ENCODE measurements at regions of chr6 and their contacts with region 1.

Region 1: GRCh38 chr6:136289579-136290409 is at the start of gene BCLAF1:
- DNase-seq: peak; percentile 97
- ATAC-seq: peak; percentile 93
- H3K4me3 ChIP-seq: peak within 1 kb of the TSS; percentile 81 to 99
- H3K27ac ChIP-seq: peak within 1 kb of the TSS; percentile 98
- H3K4me1 ChIP-seq: peaks cover 9 to 24% of the 10 kb centered on the region in 2 experiments
- H3K27me3 ChIP-seq: no peaks in the 10 kb centered on the region
- CTCF ChIP-seq: no peak
- POLR2A ChIP-seq: peak; percentile 88
- RAD21 ChIP-seq: no peak
- total RNA-seq, gene BCLAF1: 159 TPM

Region 2: DNA sequence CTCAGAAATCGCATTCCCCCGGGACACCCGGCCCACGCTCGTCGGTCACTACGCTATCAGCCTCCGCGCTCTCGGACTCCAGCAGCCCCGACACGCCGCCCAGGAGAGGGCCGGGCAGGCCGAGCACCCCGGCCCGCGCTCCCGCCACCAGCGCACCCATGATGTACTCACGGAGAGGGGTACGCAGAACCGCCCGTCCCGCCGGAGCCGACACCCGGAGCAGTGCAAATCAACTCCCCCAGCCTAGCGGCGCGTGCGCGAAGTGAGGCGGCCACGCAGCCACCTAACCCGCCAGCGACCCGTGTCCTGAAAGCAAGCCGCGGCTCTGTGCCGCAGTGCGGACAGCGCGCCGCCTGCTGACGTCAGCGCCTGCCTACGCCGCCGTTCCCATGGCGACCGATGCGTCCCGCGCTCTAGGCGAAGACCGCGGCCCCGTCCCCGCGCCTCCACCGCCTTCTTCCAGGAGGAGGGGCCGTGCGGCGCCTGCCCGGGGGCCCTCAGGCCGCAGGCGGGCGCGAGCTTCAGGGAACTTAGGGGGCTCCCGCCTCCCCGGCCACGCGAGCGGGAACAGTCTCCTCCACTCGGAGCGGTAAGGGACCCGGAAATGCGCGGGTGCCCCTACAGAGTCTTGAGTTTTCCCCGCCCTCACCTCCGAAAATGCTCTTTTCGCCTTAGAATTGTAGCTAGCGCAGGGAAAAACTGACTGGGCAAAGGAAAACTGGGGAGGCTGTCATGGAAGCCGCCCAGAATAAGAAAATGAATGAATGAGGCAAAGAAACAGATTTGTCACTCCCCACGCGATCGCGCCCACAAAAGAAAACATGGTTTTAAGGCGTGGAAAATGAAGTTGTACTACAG is 792.2 kb before region 1 on chr6 and contains the start of gene AHI1:
- CTCF ChIA-PET with region 1: no interaction called
- POLR2A ChIA-PET with region 1: no interaction called
- RAD21 ChIA-PET with region 1: no interaction called
- intact Hi-C with region 1: loop called (anchors 10 kb)
- DNase-seq: peak; percentile 85
- ATAC-seq: peak; percentile 90
- H3K4me3 ChIP-seq: peak within 1 kb of the TSS; percentile 78 to 92
- H3K27ac ChIP-seq: peak within 1 kb of the TSS; percentile 90
- H3K4me1 ChIP-seq: peaks cover 4 to 18% of the 10 kb centered on the region in 2 experiments; a peak in 3 of 4 replicates
- H3K27me3 ChIP-seq: no peaks in the 10 kb centered on the region
- CTCF ChIP-seq: no peak
- POLR2A ChIP-seq: peak; percentile 59
- RAD21 ChIP-seq: no peak
- total RNA-seq, gene AHI1: 29.6 TPM

Region 3: DNA sequence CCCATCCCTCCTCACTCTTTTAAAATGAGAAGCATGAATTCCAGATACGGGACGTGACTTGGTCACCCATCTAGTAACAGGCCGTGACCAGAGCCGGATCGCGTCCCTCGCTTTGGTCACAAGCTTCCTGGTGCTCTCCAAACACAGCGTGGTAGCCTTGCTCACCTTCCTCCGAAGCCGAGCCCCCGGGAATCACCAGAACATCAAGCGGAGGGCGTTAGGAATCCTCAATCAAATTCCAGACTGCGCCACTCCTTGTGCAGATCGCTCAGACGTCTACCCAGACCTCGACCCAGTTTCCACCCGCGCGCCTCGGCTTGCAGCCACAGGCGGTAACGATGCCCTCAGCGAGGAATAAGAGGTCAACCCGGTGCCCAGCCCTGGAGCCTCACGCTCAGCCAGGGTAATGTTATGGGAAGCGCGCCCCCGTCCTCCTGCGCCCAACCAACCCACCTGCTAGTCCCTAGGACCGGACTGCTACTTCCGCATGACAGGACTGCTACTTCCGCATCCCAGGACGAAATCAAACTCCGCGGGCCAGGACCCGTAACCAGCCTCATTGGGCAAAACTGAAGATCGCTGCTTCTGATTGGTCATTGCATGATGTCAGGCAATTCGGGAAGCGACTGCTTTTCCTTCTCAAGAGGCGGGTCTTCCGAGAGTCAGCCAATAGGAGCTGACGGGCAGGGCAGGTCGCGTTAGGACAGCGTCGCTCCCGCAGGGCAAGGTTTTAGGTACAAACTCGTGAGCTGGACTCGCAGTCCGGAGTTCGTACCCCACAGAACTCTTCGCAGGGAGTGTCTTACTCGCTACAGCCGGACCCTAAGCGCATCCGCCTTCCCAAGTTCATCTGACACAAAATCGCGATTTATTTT is 39.7 kb before region 1 on chr6 and contains the start of gene MTFR2:
- CTCF ChIA-PET with region 1: no interaction called
- POLR2A ChIA-PET with region 1: interaction called, 31 read pairs
- RAD21 ChIA-PET with region 1: no interaction called
- intact Hi-C with region 1: loop called (anchors 1 kb)
- DNase-seq: peak; percentile 98
- ATAC-seq: peak; percentile 90
- H3K4me3 ChIP-seq: peak within 1 kb of the TSS; percentile 90 to 92
- H3K27ac ChIP-seq: peak within 1 kb of the TSS; percentile 45
- H3K4me1 ChIP-seq: peaks cover 3 to 16% of the 10 kb centered on the region in 2 experiments
- H3K27me3 ChIP-seq: no peaks in the 10 kb centered on the region
- CTCF ChIP-seq: no peak
- POLR2A ChIP-seq: peak; percentile 82
- RAD21 ChIP-seq: no peak
- total RNA-seq, gene MTFR2: 13.2 TPM

Region 4: DNA sequence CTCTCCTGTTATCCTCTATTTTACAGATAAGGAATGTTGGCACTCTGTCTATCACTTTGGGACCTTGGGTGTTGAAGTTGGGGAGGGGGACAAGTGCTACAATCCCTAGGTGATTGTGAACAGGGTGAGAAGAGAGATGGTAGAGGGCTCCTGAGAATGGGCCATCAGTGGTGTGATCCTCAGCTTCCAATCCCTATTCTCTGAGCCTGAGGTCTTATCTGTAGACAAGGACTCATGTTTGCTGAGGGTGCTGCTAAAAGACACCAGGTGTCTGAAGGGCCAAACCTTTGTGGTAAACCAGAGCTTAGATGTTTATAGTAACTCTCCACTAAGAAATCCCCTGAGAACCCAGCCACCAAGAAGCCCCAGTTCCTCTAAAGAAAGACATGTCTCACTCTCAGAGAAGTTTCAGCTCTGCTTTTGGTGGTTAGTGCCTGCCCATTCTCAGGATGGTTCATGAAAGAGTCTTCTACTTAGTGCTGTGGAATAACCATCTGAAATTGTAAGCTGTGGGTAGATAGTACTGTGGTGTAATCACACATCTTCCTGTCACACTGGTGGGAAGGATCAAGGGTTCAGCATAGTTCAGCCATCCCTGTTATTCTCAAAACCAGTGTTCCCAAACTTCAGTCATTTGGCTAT is 813.2 kb after region 1 on chr6:
- CTCF ChIA-PET with region 1: no interaction called
- POLR2A ChIA-PET with region 1: no interaction called
- RAD21 ChIA-PET with region 1: no interaction called
- intact Hi-C with region 1: no loop called
- DNase-seq: no peak
- ATAC-seq: no peak
- H3K4me3 ChIP-seq: no peak overlapping the region
- H3K27ac ChIP-seq: no peak overlapping the region
- H3K4me1 ChIP-seq: no peaks in the 10 kb centered on the region
- H3K27me3 ChIP-seq: no peaks in the 10 kb centered on the region
- CTCF ChIP-seq: no peak
- POLR2A ChIP-seq: no peak
- RAD21 ChIP-seq: no peak